CD4-positive, alpha-beta T cell (primary cell): ENCODE measurements at regions of chr6 and their contacts with region 1.

Region 1: DNA sequence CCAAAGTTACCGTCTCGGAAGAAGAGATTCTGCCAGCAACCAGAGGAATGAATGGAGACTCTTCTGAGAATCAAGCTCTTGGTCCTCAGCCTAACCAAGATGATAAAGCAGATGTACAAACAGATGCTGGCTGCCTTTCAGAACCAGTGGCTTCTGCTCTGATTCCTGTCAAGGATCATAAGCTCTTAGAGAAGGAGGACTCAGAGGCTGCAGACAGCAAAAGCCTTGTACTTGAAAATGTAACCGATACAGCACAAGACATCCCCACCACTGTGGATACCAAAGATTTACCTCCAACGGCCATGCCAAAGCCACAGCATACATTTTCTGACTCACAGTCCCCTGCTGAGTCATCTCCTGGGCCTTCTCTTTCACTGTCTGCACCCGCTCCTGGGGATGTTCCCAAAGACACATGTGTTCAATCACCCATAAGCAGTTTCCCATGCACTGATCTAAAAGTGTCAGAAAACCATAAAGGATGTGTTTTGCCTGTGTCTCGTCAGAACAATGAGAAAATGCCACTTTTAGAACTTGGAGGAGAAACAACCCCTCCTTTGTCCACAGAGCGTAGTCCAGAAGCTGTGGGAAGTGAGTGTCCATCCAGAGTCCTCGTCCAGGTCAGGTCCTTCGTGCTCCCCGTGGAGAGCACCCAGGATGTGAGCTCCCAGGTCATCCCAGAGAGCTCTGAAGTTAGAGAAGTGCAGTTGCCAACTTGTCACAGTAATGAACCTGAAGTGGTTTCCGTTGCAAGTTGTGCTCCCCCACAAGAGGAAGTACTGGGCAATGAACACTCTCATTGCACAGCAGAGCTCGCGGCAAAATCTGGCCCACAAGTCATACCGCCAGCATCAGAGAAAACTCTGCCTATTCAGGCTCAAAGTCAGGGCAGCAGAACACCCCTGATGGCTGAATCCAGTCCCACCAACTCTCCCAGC is 109.6 kb downstream of the RTN4IP1 start:
- DNase-seq: peak; percentile 52 to 90 (median 68)
- ATAC-seq: peak; percentile 47
- H3K4me3 ChIP-seq: peak overlapping the region; percentile 60
- H3K4me3 Mint-ChIP-seq: peak overlapping the region; percentile 94
- H3K27ac ChIP-seq: peak overlapping the region; percentile 87 to 92
- H3K27ac Mint-ChIP-seq: peak overlapping the region; percentile 96
- H3K4me1 ChIP-seq: peaks cover 54% of the 10 kb centered on the region
- H3K4me1 Mint-ChIP-seq: peaks cover 72% of the 10 kb centered on the region
- H3K27me3 ChIP-seq: no peaks in the 10 kb centered on the region
- H3K27me3 Mint-ChIP-seq: no peaks in the 10 kb centered on the region
- CTCF ChIP-seq: no peak

Region 2: GRCh38 chr6:106534564-106534982 is 14.8 kb after region 1 on chr6:
- CTCF ChIA-PET with region 1: interaction called, 8 read pairs
- POLR2A ChIA-PET with region 1: interaction called, 38 read pairs
- intact Hi-C with region 1: loop called in 1 of 2 experiments (anchors 2 kb)
- DNase-seq: peak in 5 of 14 experiments; percentile 28 to 55 (median 46)
- ATAC-seq: peak; percentile 49
- H3K4me3 ChIP-seq: no peak overlapping the region
- H3K4me3 Mint-ChIP-seq: no peak overlapping the region
- H3K27ac ChIP-seq: no peak overlapping the region
- H3K27ac Mint-ChIP-seq: peak overlapping the region; percentile 17
- H3K4me1 ChIP-seq: peaks cover 24% of the 10 kb centered on the region
- H3K4me1 Mint-ChIP-seq: peaks cover 90% of the 10 kb centered on the region
- H3K27me3 ChIP-seq: no peaks in the 10 kb centered on the region
- H3K27me3 Mint-ChIP-seq: no peaks in the 10 kb centered on the region
- CTCF ChIP-seq: no peak

Region 3: DNA sequence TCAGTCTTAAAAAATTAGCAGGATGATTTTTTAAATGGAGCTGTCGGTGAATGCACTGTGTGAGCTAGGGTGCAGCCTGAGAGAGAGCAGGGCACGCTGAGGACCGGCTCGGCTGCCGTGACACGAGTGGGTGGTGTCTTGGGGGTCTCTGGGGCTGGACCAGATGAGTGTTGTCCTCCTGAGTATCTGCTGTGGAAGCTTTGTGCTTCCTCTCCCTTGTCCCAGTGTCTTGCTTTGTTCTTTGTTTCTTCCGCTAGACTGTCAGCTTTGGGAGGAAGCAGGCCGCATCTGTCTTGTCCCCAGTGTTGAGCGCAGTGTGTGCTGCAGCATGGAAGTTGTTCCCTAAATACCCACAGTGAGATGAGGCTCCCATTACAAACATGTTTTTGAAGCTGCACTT is 20.2 kb after region 1 on chr6:
- CTCF ChIA-PET with region 1: interaction called, 8 read pairs
- POLR2A ChIA-PET with region 1: interaction called, 38 read pairs
- intact Hi-C with region 1: loop called (anchors 2 kb)
- DNase-seq: no peak
- ATAC-seq: no peak
- H3K4me3 ChIP-seq: no peak overlapping the region
- H3K4me3 Mint-ChIP-seq: no peak overlapping the region
- H3K27ac ChIP-seq: no peak overlapping the region
- H3K27ac Mint-ChIP-seq: peak overlapping the region; percentile 66
- H3K4me1 ChIP-seq: peaks cover 14% of the 10 kb centered on the region
- H3K4me1 Mint-ChIP-seq: peaks cover 59% of the 10 kb centered on the region
- H3K27me3 ChIP-seq: no peaks in the 10 kb centered on the region
- H3K27me3 Mint-ChIP-seq: no peaks in the 10 kb centered on the region
- CTCF ChIP-seq: no peak

Region 4: GRCh38 chr6:106546691-106547414 is 27.1 kb after region 1 on chr6:
- CTCF ChIA-PET with region 1: interaction called, 3 read pairs
- POLR2A ChIA-PET with region 1: interaction called, 6 read pairs
- intact Hi-C with region 1: loop called in 1 of 2 experiments (anchors 1 kb)
- DNase-seq: peak in 2 of 14 experiments; percentile 47 to 54
- ATAC-seq: no peak
- H3K4me3 ChIP-seq: no peak overlapping the region
- H3K4me3 Mint-ChIP-seq: no peak overlapping the region
- H3K27ac ChIP-seq: peak overlapping the region in 1 of 2 donors; percentile 3
- H3K27ac Mint-ChIP-seq: peak overlapping the region; percentile 74
- H3K4me1 ChIP-seq: peaks cover 6% of the 10 kb centered on the region
- H3K4me1 Mint-ChIP-seq: peaks cover 44% of the 10 kb centered on the region
- H3K27me3 ChIP-seq: no peaks in the 10 kb centered on the region
- H3K27me3 Mint-ChIP-seq: no peaks in the 10 kb centered on the region
- CTCF ChIP-seq: no peak

Region 5: DNA sequence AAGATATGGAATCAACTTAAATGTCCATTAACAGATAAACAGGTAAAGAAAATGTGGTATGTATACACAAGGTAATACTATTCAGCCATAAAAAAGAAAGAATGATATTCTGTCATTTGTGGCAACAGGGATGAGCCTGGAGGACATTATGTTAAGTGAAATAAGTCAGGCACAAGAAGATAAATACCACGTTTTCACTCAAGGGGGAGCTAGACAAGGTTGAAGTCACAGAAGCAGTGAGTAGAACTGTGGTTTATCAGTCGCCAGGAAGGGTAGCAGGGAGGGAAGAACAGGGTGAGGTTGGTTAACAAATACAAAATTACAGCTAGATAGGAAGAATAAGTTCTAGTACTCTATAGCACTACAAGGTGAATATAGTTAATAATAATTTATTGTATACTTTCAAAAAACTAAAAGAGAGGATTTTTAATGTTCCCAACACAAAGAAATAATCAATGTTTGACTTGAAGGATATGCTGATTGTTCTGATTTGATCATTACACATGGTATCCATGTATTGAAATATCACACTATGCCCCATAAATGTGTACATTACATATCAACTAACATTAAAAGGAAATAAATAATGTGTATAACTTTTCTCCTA is 88.4 kb after region 1 on chr6:
- CTCF ChIA-PET with region 1: no interaction called
- POLR2A ChIA-PET with region 1: no interaction called
- intact Hi-C with region 1: no loop called
- DNase-seq: peak in 5 of 14 experiments; percentile 7 to 72 (median 62)
- ATAC-seq: peak; percentile 86
- H3K4me3 ChIP-seq: no peak overlapping the region
- H3K4me3 Mint-ChIP-seq: no peak overlapping the region
- H3K27ac ChIP-seq: no peak overlapping the region
- H3K27ac Mint-ChIP-seq: no peak overlapping the region
- H3K4me1 ChIP-seq: no peaks in the 10 kb centered on the region
- H3K4me1 Mint-ChIP-seq: peaks cover 5% of the 10 kb centered on the region
- H3K27me3 ChIP-seq: no peaks in the 10 kb centered on the region
- H3K27me3 Mint-ChIP-seq: no peaks in the 10 kb centered on the region
- CTCF ChIP-seq: peak; percentile 70

Region 6: DNA sequence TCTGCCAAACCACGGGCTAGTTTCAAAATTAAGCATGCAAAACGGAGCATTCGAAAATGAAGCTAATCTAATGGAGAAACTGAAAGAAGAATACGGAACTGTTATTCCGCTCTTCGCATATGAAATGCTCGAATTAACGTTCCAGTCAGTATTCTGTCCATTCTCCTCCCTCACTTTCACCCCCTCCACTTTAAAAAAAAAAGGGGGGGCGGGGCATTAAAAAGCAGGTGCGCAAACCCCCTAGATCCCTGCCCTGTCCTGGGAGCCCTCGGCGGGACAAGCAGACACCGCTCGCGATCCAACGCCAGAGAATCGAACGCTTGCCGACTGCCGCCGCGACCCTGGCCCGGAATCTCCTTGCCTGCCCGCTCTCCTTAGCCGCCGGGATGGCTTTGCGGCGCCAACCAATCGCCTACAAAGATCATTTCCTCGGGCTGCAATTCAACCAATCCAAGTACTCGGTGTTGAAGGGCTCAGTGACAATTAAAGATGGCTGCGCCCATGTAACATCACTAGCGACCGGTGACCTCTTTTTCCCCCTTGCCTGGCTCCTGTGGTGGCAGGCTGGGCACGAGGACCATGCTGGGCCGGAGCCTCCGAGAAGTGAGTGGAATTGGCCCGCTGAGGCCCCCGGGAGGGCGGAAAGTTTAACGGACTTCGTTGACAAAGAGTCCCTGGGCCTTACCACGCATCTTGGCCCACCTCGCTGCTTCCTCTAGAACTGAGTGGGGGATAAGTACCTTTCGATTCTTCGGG is 109.6 kb after region 1 on chr6 and contains the starts of genes QRSL1 and RTN4IP1:
- CTCF ChIA-PET with region 1: no interaction called
- POLR2A ChIA-PET with region 1: no interaction called
- intact Hi-C with region 1: loop called (anchors 5 to 10 kb)
- DNase-seq: peak; percentile 67 to 95 (median 78)
- ATAC-seq: peak; percentile 94
- H3K4me3 ChIP-seq: peak within 1 kb of the TSS; percentile 79
- H3K4me3 Mint-ChIP-seq: peak within 1 kb of the TSS; percentile 97
- H3K27ac ChIP-seq: peak within 1 kb of the TSS; percentile 64 to 83
- H3K27ac Mint-ChIP-seq: peak within 1 kb of the TSS; percentile 96
- H3K4me1 ChIP-seq: peaks cover 15% of the 10 kb centered on the region
- H3K4me1 Mint-ChIP-seq: peaks cover 42% of the 10 kb centered on the region
- H3K27me3 ChIP-seq: no peaks in the 10 kb centered on the region
- H3K27me3 Mint-ChIP-seq: no peaks in the 10 kb centered on the region
- CTCF ChIP-seq: no peak
- total RNA-seq, gene QRSL1: 7.3 to 9.3 TPM
- total RNA-seq, gene RTN4IP1: 2.4 to 2.5 TPM

Region 7: DNA sequence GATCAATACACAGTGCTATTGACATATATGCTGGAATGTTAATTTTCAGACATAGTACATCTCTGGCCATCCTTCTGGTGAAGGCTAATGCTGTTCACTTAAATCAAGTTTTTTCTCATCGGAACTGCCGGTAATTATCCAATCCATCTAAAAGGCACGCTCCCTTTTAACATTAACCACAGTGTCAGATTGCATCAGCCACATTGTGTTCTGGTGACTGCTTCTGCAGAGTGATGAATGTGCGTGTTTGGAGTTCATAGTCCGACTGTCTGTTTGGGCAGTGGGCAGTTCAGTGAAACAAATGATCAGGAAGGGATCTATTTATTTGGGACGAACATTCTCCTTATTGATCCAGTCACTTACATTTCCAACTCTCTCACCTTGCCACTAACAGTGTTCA is 1019.7 kb after region 1 on chr6:
- CTCF ChIA-PET with region 1: no interaction called
- POLR2A ChIA-PET with region 1: no interaction called
- intact Hi-C with region 1: no loop called
- DNase-seq: no peak
- ATAC-seq: no peak
- H3K4me3 ChIP-seq: no peak overlapping the region
- H3K4me3 Mint-ChIP-seq: no peak overlapping the region
- H3K27ac ChIP-seq: no peak overlapping the region
- H3K27ac Mint-ChIP-seq: no peak overlapping the region
- H3K4me1 ChIP-seq: no peaks in the 10 kb centered on the region
- H3K4me1 Mint-ChIP-seq: no peaks in the 10 kb centered on the region
- H3K27me3 ChIP-seq: peaks cover 0 to 12% of the 10 kb centered on the region in 2 experiments
- H3K27me3 Mint-ChIP-seq: peaks cover 45% of the 10 kb centered on the region
- CTCF ChIP-seq: no peak